ENCODE measurements at regions of chr1 and their contacts with region 1.

Region 1: GRCh38 chr1:26431979-26432695 is at the start of gene DHDDS:
- DNase-seq: peak; percentile 98
- H3K4me3 Mint-ChIP-seq: peak within 1 kb of the TSS; percentile 94
- H3K27ac Mint-ChIP-seq: peak within 1 kb of the TSS; percentile 89
- H3K4me1 Mint-ChIP-seq: peaks cover 18% of the 10 kb centered on the region
- H3K27me3 Mint-ChIP-seq: peaks cover 12% of the 10 kb centered on the region
- total RNA-seq, gene DHDDS: 58.4 and 60.9 TPM in 2 replicates

Region 2: DNA sequence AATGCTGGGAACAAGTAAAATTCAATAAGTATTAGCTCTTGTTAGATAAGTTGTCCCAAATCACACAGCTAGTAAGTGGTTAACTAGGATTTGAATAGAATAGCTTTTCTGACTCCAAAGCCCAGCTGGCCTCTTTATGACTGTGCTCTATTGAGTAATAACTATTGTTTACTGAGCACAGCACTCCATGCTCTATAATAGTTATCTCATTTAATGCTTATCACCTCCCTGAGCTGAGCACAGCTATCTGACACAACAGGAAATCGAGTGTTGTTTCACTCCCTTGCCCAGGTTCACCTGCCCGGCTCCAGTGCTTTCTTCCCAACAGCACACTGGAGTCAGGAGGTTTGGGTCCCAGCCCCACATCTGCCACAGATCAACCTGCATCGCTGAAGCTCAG is 487.2 kb before region 1 on chr1:
- intact Hi-C with region 1: no loop called
- DNase-seq: no peak
- H3K4me3 Mint-ChIP-seq: no peak overlapping the region
- H3K27ac Mint-ChIP-seq: no peak overlapping the region
- H3K4me1 Mint-ChIP-seq: no peaks in the 10 kb centered on the region
- H3K27me3 Mint-ChIP-seq: peaks cover 2% of the 10 kb centered on the region

Region 3: DNA sequence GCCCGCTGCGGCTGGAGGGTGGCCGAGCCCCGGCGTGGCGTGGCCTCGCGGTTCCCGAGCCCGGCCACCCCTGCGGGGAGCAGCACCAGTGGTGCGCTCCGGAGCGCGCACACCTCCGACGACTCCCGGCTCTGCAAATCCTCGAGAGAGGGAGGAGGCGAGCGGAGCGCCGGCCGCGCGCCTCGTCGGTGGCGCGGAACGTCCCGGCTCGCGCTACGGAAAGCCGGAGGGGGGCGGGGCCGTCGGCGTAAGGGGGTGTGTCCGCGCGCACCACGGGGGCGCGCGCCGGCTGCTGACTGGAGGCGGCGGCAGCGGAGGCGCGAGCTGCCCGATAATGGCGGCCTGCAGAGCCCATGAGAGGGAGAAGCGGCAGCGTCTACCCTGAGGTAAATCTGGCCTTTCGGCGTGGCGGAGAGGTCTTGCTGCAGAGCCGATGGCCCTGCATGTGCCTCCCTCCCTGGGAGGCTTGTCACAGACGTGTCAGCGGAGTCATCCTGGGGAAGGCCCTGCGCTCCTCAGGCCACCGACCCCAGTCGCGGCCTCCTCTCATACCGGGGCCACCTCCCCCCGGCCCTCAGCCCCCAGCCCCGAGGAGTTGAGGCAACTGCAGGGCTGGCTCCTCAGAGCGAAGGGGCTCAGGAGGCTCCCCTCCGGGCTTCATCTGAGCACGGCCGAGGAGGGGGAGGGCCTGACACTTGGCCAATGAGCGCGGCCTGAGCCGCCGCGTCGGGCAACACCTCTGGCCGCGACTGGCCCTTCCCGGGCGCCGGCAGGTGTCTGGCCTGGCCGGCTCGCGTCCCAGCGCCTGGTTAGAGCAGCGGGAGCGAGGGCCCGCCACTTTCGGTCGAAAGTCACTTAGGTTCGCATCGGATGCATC is 320.4 kb before region 1 on chr1 and contains the start of gene PDIK1L:
- intact Hi-C with region 1: loop called (anchors 1 kb)
- DNase-seq: peak; percentile 91
- H3K4me3 Mint-ChIP-seq: peak within 1 kb of the TSS; percentile 96
- H3K27ac Mint-ChIP-seq: peak within 1 kb of the TSS; percentile 92
- H3K4me1 Mint-ChIP-seq: peaks cover 36% of the 10 kb centered on the region
- H3K27me3 Mint-ChIP-seq: no peaks in the 10 kb centered on the region
- total RNA-seq, gene PDIK1L: 15.5 and 18.9 TPM in 2 replicates

Region 4: GRCh38 chr1:26336477-26337205 is 95.5 kb before region 1 on chr1:
- intact Hi-C with region 1: loop called (anchors 1 kb)
- DNase-seq: peak; percentile 70
- H3K4me3 Mint-ChIP-seq: peak overlapping the region; percentile 90
- H3K27ac Mint-ChIP-seq: no peak overlapping the region
- H3K4me1 Mint-ChIP-seq: peaks cover 9% of the 10 kb centered on the region
- H3K27me3 Mint-ChIP-seq: peaks cover 27% of the 10 kb centered on the region

Region 5: GRCh38 chr1:26482921-26483680 is 51.0 kb after region 1 on chr1:
- intact Hi-C with region 1: no loop called
- DNase-seq: no peak
- H3K4me3 Mint-ChIP-seq: no peak overlapping the region
- H3K27ac Mint-ChIP-seq: peak overlapping the region; percentile 41
- H3K4me1 Mint-ChIP-seq: peaks cover 10% of the 10 kb centered on the region
- H3K27me3 Mint-ChIP-seq: no peaks in the 10 kb centered on the region

Region 6: GRCh38 chr1:26493267-26493666 is 61.1 kb after region 1 on chr1:
- intact Hi-C with region 1: no loop called
- DNase-seq: no peak
- H3K4me3 Mint-ChIP-seq: no peak overlapping the region
- H3K27ac Mint-ChIP-seq: no peak overlapping the region
- H3K4me1 Mint-ChIP-seq: no peaks in the 10 kb centered on the region
- H3K27me3 Mint-ChIP-seq: peaks cover 3% of the 10 kb centered on the region

Region 7: DNA sequence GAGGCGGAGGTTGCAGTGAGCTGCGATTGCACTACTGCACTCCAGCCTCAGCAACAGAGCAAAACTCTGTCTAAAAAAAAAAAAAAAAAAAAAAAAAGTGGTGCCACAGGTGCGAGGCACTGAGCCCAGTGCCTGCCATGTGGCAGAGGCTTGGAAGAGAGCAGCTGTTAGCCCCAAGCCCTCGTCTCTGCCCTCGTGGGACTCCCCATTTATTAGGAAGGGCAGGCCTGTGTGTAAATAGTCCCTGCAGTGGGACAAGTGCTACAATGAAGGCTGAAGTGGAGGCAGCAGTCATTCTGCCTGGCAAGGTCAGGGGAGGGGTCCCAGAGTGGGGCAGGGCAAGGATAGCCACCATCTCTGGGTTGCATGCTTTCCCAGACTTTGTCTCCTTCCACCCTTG is 103.9 kb after region 1 on chr1:
- intact Hi-C with region 1: no loop called
- DNase-seq: no peak
- H3K4me3 Mint-ChIP-seq: no peak overlapping the region
- H3K27ac Mint-ChIP-seq: no peak overlapping the region
- H3K4me1 Mint-ChIP-seq: peaks cover 70% of the 10 kb centered on the region
- H3K27me3 Mint-ChIP-seq: no peaks in the 10 kb centered on the region

Measured in activated T-helper 1 cell treated with anti-CD3 and anti-CD28 coated beads, Interleukin-12 subunit alpha, Interleukin-12 subunit beta, Interleukin-2, Interleukin-4 antibody, amounts not matched to agents 30 ng/mL and 10 ng/mL and 1 ng/mL, durations not matched to agents 14 hours and 24 hours and 36 hours (primary cell).